ENCODE measurements at regions of chr1 and their contacts with region 1.

Region 1: GRCh38 chr1:86965012-86965826 is 50.8 kb downstream of the HS2ST1 start:
- DNase-seq: peak; percentile 68
- H3K4me3 ChIP-seq: no peak overlapping the region
- H3K27ac ChIP-seq: no peak overlapping the region
- H3K4me1 ChIP-seq: no peaks in the 10 kb centered on the region
- H3K27me3 ChIP-seq: no peaks in the 10 kb centered on the region

Region 2: GRCh38 chr1:86774305-86775295 is 190.6 kb before region 1 on chr1:
- in situ Hi-C with region 1: loop called (anchors 10 kb)
- DNase-seq: peak; percentile 76
- H3K4me3 ChIP-seq: peak overlapping the region; percentile 43; the same call in 1 of the 2 replicates
- H3K27ac ChIP-seq: no peak overlapping the region
- H3K4me1 ChIP-seq: peaks cover 28% of the 10 kb centered on the region
- H3K27me3 ChIP-seq: no peaks in the 10 kb centered on the region

Measured in GM23248 (cell line).